ENCODE measurements at regions of chr13 and their contacts with region 1.

Region 1: DNA sequence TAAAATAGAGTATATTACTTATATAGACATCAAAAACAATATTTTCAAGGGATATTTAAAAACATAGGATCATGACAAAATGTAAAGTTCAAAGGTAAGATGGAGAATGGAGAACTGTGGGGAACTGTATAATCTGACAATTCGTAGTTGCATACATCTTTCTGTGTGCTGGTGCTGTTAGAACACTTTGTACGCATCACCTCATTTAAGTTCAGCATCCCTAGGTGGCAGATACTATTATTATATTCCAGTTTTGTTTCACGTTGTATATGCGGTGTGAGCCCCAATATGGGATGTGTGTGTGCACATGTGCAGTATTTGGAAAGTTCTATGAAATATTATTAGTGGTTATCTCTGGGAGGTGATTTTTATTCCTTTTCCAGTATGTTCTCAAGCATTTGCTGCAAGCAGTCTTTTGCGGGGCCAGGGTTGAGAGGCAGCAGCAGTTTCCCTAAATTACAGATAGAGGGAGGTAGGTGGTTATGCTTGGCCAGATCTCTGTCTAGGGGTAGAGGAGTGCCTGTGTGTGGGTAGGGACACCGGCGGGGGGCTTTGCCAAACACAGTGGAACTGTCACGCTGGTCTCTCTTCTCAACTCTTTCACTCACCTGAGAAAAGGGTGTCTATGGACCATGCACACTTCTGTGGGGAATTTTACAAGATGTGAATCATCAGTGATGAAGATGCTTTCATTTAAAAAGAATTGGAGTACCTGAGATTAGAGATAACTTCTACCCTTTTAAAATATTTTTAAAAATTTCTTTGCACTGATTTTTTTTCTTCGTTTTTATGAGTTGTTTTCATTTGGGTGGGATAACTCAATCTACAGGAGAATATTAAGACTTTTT is 55.6 kb upstream of the ALOX5AP start:
- DNase-seq: no peak
- H3K4me3 ChIP-seq: no peak overlapping the region
- H3K27ac ChIP-seq: no peak overlapping the region
- H3K4me1 ChIP-seq: no peaks in the 10 kb centered on the region
- H3K27me3 ChIP-seq: no peaks in the 10 kb centered on the region
- CTCF ChIP-seq: peak; percentile 37 to 58 (median 52)
- POLR2A ChIP-seq: no peak

Region 2: GRCh38 chr13:29583073-29583785 is 1096.5 kb before region 1 on chr13:
- intact Hi-C with region 1: no loop called
- DNase-seq: no peak
- H3K4me3 ChIP-seq: no peak overlapping the region
- H3K27ac ChIP-seq: no peak overlapping the region
- H3K4me1 ChIP-seq: peaks cover 8% of the 10 kb centered on the region in 2 donors
- H3K27me3 ChIP-seq: no peaks in the 10 kb centered on the region
- CTCF ChIP-seq: no peak
- POLR2A ChIP-seq: no peak

Region 3: GRCh38 chr13:30802953-30803478 is 123.3 kb after region 1 on chr13:
- intact Hi-C with region 1: loop called (anchors 5 to 10 kb)
- DNase-seq: peak; percentile 90 to 96 (median 93)
- H3K4me3 ChIP-seq: peak overlapping the region in 2 of 4 donors; percentile 11 to 52
- H3K27ac ChIP-seq: peak overlapping the region in 3 of 5 donors; percentile 23 to 71 (median 28)
- H3K4me1 ChIP-seq: peaks cover 18 to 33% of the 10 kb centered on the region in 2 donors
- H3K27me3 ChIP-seq: no peaks in the 10 kb centered on the region
- CTCF ChIP-seq: peak; percentile 92 to 98 (median 96)
- POLR2A ChIP-seq: peak in 1 of 2 donors; percentile 57